ENCODE measurements at regions of chr6 and their contacts with region 1.

Region 1: DNA sequence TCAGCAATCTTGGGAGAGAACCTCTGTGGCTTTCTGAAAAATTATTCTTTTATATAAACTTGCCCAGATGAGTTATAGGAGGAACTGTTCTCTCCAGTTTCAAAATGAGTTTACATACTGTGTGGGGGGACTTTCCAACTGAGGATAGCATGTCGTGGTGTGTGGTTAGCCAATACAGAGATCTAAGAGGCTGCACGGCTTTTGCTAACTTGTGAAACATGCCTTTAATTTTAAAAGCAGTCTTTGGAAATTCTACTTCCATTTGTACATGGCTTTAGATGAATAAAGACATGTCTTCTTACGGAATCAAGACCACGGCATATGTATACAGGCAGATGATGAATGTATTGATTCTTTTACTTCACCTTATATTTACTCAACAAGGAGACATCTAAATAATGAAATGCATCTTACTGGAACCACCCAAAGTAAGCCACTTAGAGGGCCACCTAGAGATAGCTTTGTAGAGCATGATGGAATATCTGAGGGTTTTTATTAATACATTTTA is 39.8 kb downstream of the HIVEP1 start:
- DNase-seq: peak; percentile 93
- H3K4me3 Mint-ChIP-seq: peak overlapping the region; percentile 84
- H3K27ac Mint-ChIP-seq: peak overlapping the region; percentile 93
- H3K4me1 Mint-ChIP-seq: peaks cover 63% of the 10 kb centered on the region
- H3K27me3 Mint-ChIP-seq: no peaks in the 10 kb centered on the region

Region 2: DNA sequence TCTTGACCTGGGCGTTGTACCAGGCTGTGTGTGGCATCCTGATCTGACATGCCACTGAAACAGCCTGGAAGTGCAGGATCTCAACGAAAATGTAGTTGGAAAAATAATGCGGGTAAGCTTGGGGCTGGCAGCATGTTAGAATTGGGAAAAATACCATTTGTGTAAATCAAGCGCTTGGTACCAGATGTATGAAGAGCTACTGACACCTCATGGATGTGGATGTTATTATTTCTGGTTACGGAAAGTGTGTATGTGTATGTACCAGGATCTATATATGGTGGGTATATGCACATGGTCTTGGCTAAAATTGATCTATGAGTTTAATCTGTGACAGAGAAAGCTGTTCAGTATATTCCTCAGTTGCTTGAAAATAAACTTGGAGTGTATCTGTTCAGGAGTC is 17.1 kb before region 1 on chr6:
- intact Hi-C with region 1: no loop called
- DNase-seq: no peak
- H3K4me3 Mint-ChIP-seq: no peak overlapping the region
- H3K27ac Mint-ChIP-seq: no peak overlapping the region
- H3K4me1 Mint-ChIP-seq: peaks cover 56% of the 10 kb centered on the region
- H3K27me3 Mint-ChIP-seq: no peaks in the 10 kb centered on the region

Region 3: GRCh38 chr6:12241493-12242175 is 189.7 kb after region 1 on chr6:
- intact Hi-C with region 1: loop called (anchors 1 kb)
- DNase-seq: no peak
- H3K4me3 Mint-ChIP-seq: no peak overlapping the region
- H3K27ac Mint-ChIP-seq: peak overlapping the region; percentile 32
- H3K4me1 Mint-ChIP-seq: peaks cover 13% of the 10 kb centered on the region
- H3K27me3 Mint-ChIP-seq: no peaks in the 10 kb centered on the region

Measured in activated CD4-positive, alpha-beta T cell treated with anti-CD3 and anti-CD28 coated beads, Interleukin-2, amount 10 ng/mL, durations not matched to agents 24 days and 14 days (primary cell).